ENCODE measurements at regions of chr10 and their contacts with region 1.

Region 1: GRCh38 chr10:84537447-84537931 is 209.1 kb downstream of the CCSER2 start:
- DNase-seq: peak; percentile 49
- ATAC-seq: peak; percentile 62
- H3K4me3 ChIP-seq: peak overlapping the region in 2 of 3 experiments; percentile 9 to 44; a peak in 2 of 6 replicates
- H3K27ac ChIP-seq: peak overlapping the region; percentile 24
- H3K4me1 ChIP-seq: peaks cover 51% of the 10 kb centered on the region
- H3K27me3 ChIP-seq: peaks cover 0 to 5% of the 10 kb centered on the region in 2 experiments; a peak in 1 of 5 replicates
- CTCF ChIP-seq: peak; percentile 84
- EP300 ChIP-seq: no peak
- POLR2A ChIP-seq: no peak
- RAD21 ChIP-seq: peak; percentile 80

Region 2: GRCh38 chr10:84139126-84140035 is 398.1 kb before region 1 on chr10 and contains the start of gene GHITM:
- CTCF ChIA-PET with region 1: no interaction called
- POLR2A ChIA-PET with region 1: interaction called, 3 read pairs
- in situ Hi-C with region 1: no loop called
- intact Hi-C with region 1: loop called (anchors 10 kb)
- DNase-seq: peak; percentile 96
- ATAC-seq: peak; percentile 93
- H3K4me3 ChIP-seq: peak within 1 kb of the TSS; percentile 77 to 96 (median 87)
- H3K27ac ChIP-seq: peak within 1 kb of the TSS; percentile 85
- H3K4me1 ChIP-seq: peaks cover 38% of the 10 kb centered on the region
- H3K27me3 ChIP-seq: no peaks in the 10 kb centered on the region; a peak in 1 of 5 replicates
- CTCF ChIP-seq: peak; percentile 37; the same call in 1 of the 2 replicates
- EP300 ChIP-seq: 0 out of 4 replicates have a peak, but pooled peaks of 1 of the 2 experiments have one; percentile 41
- POLR2A ChIP-seq: peak; percentile 79 to 84
- RAD21 ChIP-seq: peak; percentile 49; the same call in 1 of the 2 replicates
- total RNA-seq, gene GHITM: 212 and 345 TPM in 2 replicates

Region 3: GRCh38 chr10:84360637-84361365 is 176.7 kb before region 1 on chr10:
- CTCF ChIA-PET with region 1: no interaction called
- POLR2A ChIA-PET with region 1: no interaction called
- in situ Hi-C with region 1: loop called (anchors 5 kb)
- intact Hi-C with region 1: no loop called
- DNase-seq: no peak
- ATAC-seq: peak; percentile 60
- H3K4me3 ChIP-seq: peak overlapping the region; percentile 3 to 49 (median 9); a peak in 4 of 6 replicates
- H3K27ac ChIP-seq: no peak overlapping the region
- H3K4me1 ChIP-seq: peaks cover 56% of the 10 kb centered on the region
- H3K27me3 ChIP-seq: no peaks in the 10 kb centered on the region
- CTCF ChIP-seq: no peak
- EP300 ChIP-seq: no peak
- POLR2A ChIP-seq: no peak
- RAD21 ChIP-seq: no peak

Region 4: GRCh38 chr10:84429926-84430520 is 107.5 kb before region 1 on chr10:
- CTCF ChIA-PET with region 1: interaction called, 32 read pairs
- POLR2A ChIA-PET with region 1: interaction called, 6 read pairs
- in situ Hi-C with region 1: loop called (anchors 10 kb)
- intact Hi-C with region 1: loop called (anchors 1 kb)
- DNase-seq: peak; percentile 69
- ATAC-seq: peak; percentile 95
- H3K4me3 ChIP-seq: no peak overlapping the region
- H3K27ac ChIP-seq: no peak overlapping the region
- H3K4me1 ChIP-seq: peaks cover 12% of the 10 kb centered on the region
- H3K27me3 ChIP-seq: no peaks in the 10 kb centered on the region
- CTCF ChIP-seq: peak; percentile 83
- EP300 ChIP-seq: no peak
- POLR2A ChIP-seq: no peak
- RAD21 ChIP-seq: peak; percentile 60; the same call in 1 of the 2 replicates

Region 5: GRCh38 chr10:84715911-84716310 is 178.4 kb after region 1 on chr10:
- CTCF ChIA-PET with region 1: no interaction called
- POLR2A ChIA-PET with region 1: no interaction called
- in situ Hi-C with region 1: no loop called
- intact Hi-C with region 1: loop called (anchors 1 kb)
- DNase-seq: peak; percentile 41
- ATAC-seq: peak; percentile 94
- H3K4me3 ChIP-seq: no peak overlapping the region
- H3K27ac ChIP-seq: no peak overlapping the region
- H3K4me1 ChIP-seq: no peaks in the 10 kb centered on the region
- H3K27me3 ChIP-seq: no peaks in the 10 kb centered on the region
- CTCF ChIP-seq: peak; percentile 70
- EP300 ChIP-seq: no peak
- POLR2A ChIP-seq: no peak
- RAD21 ChIP-seq: no peak